ENCODE measurements at regions of chr15 and their contacts with region 1.

Region 1: GRCh38 chr15:68672781-68673205 is 94.0 kb downstream of the CORO2B start:
- DNase-seq: no peak
- ATAC-seq: no peak
- H3K4me3 Mint-ChIP-seq: no peak overlapping the region
- H3K27ac Mint-ChIP-seq: no peak overlapping the region
- H3K4me1 Mint-ChIP-seq: peaks cover 15% of the 10 kb centered on the region
- H3K27me3 Mint-ChIP-seq: peaks cover 11% of the 10 kb centered on the region
- CTCF ChIP-seq: no peak

Region 2: GRCh38 chr15:68252925-68253534 is 419.8 kb before region 1 on chr15:
- CTCF ChIA-PET with region 1: interaction called, 5 read pairs
- POLR2A ChIA-PET with region 1: no interaction called
- intact Hi-C with region 1: loop called (anchors 2 kb)
- DNase-seq: no peak
- ATAC-seq: peak; percentile 37
- H3K4me3 Mint-ChIP-seq: no peak overlapping the region
- H3K27ac Mint-ChIP-seq: no peak overlapping the region
- H3K4me1 Mint-ChIP-seq: peaks cover 4% of the 10 kb centered on the region
- H3K27me3 Mint-ChIP-seq: peaks cover 17% of the 10 kb centered on the region
- CTCF ChIP-seq: peak; percentile 34

Region 3: DNA sequence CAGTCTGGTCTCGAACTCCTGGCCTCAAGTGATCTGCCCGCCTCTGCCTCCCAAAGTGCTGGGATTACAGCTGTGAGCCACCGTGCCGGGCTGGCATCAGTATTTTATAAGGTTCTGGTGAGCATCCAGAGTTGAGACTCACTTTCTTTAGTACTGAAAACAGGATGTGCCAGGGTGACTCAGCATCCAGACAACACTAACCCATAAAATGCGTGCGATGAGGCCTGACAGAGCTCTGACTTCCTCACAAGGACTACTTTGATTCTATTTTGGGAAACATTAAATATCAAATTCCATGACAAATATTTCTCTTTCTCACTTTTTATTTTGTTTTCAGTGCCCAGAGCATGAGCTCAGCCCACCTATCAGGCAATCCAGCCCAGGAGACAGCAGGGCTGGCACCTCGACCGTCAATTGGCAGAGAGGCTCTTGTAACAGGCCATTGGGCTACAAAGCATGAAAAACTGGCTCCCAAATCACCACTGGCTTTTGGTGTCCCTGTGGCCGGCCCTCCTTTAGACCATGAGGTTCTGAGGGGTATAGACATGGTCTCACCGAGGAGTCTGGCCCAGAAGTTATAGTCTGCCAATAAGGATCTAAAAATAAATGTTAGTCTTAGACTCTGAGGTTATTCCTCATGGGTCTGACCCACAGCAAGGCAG is 320.3 kb before region 1 on chr15:
- CTCF ChIA-PET with region 1: no interaction called
- POLR2A ChIA-PET with region 1: no interaction called
- intact Hi-C with region 1: no loop called
- DNase-seq: no peak
- ATAC-seq: peak; percentile 56
- H3K4me3 Mint-ChIP-seq: no peak overlapping the region
- H3K27ac Mint-ChIP-seq: peak overlapping the region; percentile 68
- H3K4me1 Mint-ChIP-seq: peaks cover 9% of the 10 kb centered on the region
- H3K27me3 Mint-ChIP-seq: peaks cover 4% of the 10 kb centered on the region
- CTCF ChIP-seq: no peak

Region 4: GRCh38 chr15:68559345-68560310 is 113.2 kb before region 1 on chr15:
- CTCF ChIA-PET with region 1: interaction called, 107 read pairs
- POLR2A ChIA-PET with region 1: interaction called, 6 read pairs
- intact Hi-C with region 1: loop called (anchors 1 kb)
- DNase-seq: peak; percentile 78
- ATAC-seq: peak; percentile 95
- H3K4me3 Mint-ChIP-seq: peak overlapping the region; percentile 83
- H3K27ac Mint-ChIP-seq: no peak overlapping the region
- H3K4me1 Mint-ChIP-seq: peaks cover 23% of the 10 kb centered on the region
- H3K27me3 Mint-ChIP-seq: peaks cover 28% of the 10 kb centered on the region
- CTCF ChIP-seq: peak; percentile 98

Region 5: DNA sequence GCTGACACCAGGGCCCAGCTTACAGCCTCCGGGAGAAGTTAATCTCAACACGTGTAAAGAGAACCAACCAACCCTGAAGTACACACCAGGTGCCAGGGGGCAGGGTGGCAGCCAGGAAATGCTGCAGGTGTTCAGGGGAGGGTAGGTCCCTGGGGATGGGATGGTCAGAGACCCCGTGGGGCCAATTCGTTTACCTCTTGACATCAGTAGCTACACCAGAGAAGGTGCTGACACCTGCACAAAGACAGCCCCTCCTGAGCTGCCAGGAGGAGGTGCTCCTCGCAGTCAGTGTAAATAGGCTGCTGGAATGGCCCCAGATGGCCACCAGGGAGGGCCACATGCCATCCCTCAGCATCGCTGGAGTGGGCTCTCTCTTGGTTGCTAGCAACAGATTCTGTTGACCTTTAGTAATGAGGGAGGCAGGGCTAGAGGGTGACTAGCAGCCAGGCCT is 41.2 kb before region 1 on chr15:
- CTCF ChIA-PET with region 1: interaction called, 6 read pairs
- POLR2A ChIA-PET with region 1: interaction called, 11 read pairs
- intact Hi-C with region 1: loop called (anchors 5 kb)
- DNase-seq: peak; percentile 37
- ATAC-seq: peak; percentile 77
- H3K4me3 Mint-ChIP-seq: peak overlapping the region; percentile 60
- H3K27ac Mint-ChIP-seq: peak overlapping the region; percentile 77
- H3K4me1 Mint-ChIP-seq: peaks cover 98% of the 10 kb centered on the region
- H3K27me3 Mint-ChIP-seq: no peaks in the 10 kb centered on the region
- CTCF ChIP-seq: no peak

Region 6: DNA sequence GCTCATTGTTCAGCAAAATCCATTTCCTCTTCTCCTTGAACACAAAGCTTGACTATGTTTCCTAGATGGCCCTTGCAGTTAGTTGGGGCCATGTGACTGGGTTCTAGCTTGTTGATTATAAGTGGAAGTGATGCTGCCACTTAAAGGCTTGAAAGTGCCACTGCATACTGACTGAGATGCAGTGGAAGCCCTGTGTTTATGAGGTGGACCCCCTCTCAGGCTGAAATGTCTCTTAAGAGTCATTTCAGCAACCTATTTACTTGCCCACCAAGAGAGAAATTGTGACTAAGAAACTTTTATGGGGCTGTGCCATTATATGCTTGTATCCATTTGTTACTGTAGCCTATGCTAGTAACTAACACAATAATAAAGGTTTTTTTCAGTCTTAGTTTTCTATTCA is 156.3 kb after region 1 on chr15:
- CTCF ChIA-PET with region 1: interaction called, 17 read pairs
- POLR2A ChIA-PET with region 1: no interaction called
- intact Hi-C with region 1: no loop called
- DNase-seq: no peak
- ATAC-seq: peak; percentile 84
- H3K4me3 Mint-ChIP-seq: no peak overlapping the region
- H3K27ac Mint-ChIP-seq: no peak overlapping the region
- H3K4me1 Mint-ChIP-seq: peaks cover 3% of the 10 kb centered on the region
- H3K27me3 Mint-ChIP-seq: peaks cover 4% of the 10 kb centered on the region
- CTCF ChIP-seq: no peak

Region 7: DNA sequence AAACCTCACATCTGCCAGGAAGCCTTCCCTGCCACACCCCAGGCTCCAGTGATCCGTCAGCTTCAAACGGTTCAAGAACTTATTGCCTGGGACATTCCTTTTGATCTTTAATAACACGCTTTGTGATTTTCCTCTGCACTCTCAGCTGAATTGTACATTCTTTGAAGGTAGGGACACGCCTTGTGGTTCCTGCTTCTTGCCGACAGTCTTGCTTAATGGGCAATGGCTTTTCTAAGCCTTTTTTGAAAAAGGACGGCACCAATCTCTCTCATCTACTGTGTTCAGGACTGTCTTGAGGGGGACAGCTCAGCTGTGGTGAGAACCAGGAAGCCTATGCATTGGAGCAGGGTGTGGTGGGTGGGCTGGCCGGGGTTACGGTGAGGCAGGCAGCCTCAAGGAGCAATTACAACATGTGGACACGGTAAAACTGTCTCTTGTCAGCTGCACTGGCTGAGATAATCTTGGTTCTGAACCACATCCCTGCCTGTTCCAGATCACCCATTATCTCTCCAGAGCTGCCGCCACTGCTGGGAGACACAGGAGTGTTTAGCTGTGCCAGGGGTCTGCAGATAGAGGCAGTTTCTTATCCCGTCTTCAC is 441.6 kb after region 1 on chr15:
- CTCF ChIA-PET with region 1: no interaction called
- POLR2A ChIA-PET with region 1: no interaction called
- intact Hi-C with region 1: no loop called
- DNase-seq: no peak
- ATAC-seq: no peak
- H3K4me3 Mint-ChIP-seq: no peak overlapping the region
- H3K27ac Mint-ChIP-seq: no peak overlapping the region
- H3K4me1 Mint-ChIP-seq: no peaks in the 10 kb centered on the region
- H3K27me3 Mint-ChIP-seq: peaks cover 32% of the 10 kb centered on the region
- CTCF ChIP-seq: no peak

Measured in activated B cell treated with CpG ODN at 0.5 μM for 24 hours (primary cell).